Posterior vena cava (tissue), 2 donors: ENCODE measurements at regions of chrX and their contacts with region 1.

Region 1: GRCh38 chrX:38803586-38804431 is 2.5 kb downstream of the MID1IP1 start:
- DNase-seq: peak; percentile 94

Region 2: GRCh38 chrX:38868941-38869401 is 65.2 kb after region 1 on chrX:
- intact Hi-C with region 1: loop called in 1 of 2 experiments (anchors 10 kb)
- DNase-seq: no peak

Region 3: GRCh38 chrX:38929966-38930421 is 126.2 kb after region 1 on chrX:
- intact Hi-C with region 1: loop called in 1 of 2 experiments (anchors 10 kb)
- DNase-seq: no peak

Region 4: GRCh38 chrX:38968344-38969216 is 164.8 kb after region 1 on chrX:
- intact Hi-C with region 1: no loop called
- DNase-seq: no peak